ENCODE measurements at regions of chr10 and their contacts with region 1.

Region 1: GRCh38 chr10:102072673-102073527 is 7.8 kb downstream of the HPS6 start:
- DNase-seq: no peak
- H3K4me3 ChIP-seq: no peak overlapping the region
- H3K27me3 ChIP-seq: no peaks in the 10 kb centered on the region
- CTCF ChIP-seq: peak; percentile 95

Region 2: GRCh38 chr10:102040305-102041050 is 32.4 kb before region 1 on chr10:
- CTCF ChIA-PET with region 1: interaction called, 13 read pairs
- POLR2A ChIA-PET with region 1: no interaction called
- DNase-seq: no peak
- H3K4me3 ChIP-seq: no peak overlapping the region
- H3K27me3 ChIP-seq: no peaks in the 10 kb centered on the region
- CTCF ChIP-seq: no peak

Region 3: GRCh38 chr10:102085336-102085735 is 12.4 kb after region 1 on chr10:
- CTCF ChIA-PET with region 1: interaction called, 24 read pairs
- POLR2A ChIA-PET with region 1: no interaction called
- DNase-seq: no peak
- H3K4me3 ChIP-seq: no peak overlapping the region
- H3K27me3 ChIP-seq: no peaks in the 10 kb centered on the region
- CTCF ChIP-seq: no peak

Region 4: GRCh38 chr10:102090772-102091171 is 17.9 kb after region 1 on chr10:
- CTCF ChIA-PET with region 1: interaction called, 24 read pairs
- POLR2A ChIA-PET with region 1: no interaction called
- DNase-seq: no peak
- H3K4me3 ChIP-seq: no peak overlapping the region
- H3K27me3 ChIP-seq: no peaks in the 10 kb centered on the region
- CTCF ChIP-seq: no peak

Region 5: DNA sequence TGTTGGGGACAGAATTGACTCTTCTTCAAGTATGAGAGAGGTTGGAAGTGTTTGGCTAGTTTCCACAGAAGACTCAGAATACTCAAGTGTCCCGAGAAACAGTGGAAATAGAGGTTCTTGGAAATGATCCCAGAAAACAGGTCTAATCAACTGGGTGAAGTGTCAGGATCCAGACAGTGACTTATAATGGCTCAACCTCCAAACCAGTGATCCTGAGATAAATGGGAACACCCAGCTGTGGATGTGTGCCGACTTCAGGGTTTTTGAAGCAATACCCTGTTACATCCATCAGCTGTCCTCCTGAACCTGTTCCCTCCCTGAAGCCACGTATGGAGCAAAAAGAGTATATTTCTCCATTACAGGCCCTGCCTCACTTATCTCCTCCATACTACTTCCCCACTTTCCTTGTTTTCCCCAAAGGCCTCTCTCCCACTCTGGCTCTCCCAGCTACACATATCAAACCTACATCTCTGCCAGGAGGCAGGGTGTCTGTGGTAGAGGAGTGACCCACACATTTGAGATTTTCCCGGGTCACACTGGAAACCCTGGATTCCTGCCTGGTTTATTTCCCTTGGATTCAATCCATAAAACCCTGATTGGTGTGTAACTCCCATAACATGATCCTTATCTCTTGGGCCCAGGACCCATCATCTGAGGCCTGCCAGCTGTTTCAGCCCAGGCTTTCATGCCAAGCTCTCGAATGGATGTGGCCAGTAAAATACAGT is 135.6 kb after region 1 on chr10:
- CTCF ChIA-PET with region 1: no interaction called
- POLR2A ChIA-PET with region 1: no interaction called
- DNase-seq: no peak
- H3K4me3 ChIP-seq: no peak overlapping the region
- H3K27me3 ChIP-seq: peaks cover 2% of the 10 kb centered on the region; the same call in 1 of the 2 replicates
- CTCF ChIP-seq: no peak

Region 6: GRCh38 chr10:102393246-102394078 is 320.6 kb after region 1 on chr10:
- CTCF ChIA-PET with region 1: no interaction called
- POLR2A ChIA-PET with region 1: no interaction called
- DNase-seq: no peak
- H3K4me3 ChIP-seq: peak overlapping the region; percentile 79
- H3K27me3 ChIP-seq: no peaks in the 10 kb centered on the region
- CTCF ChIP-seq: peak; percentile 95; the same call in 1 of the 2 replicates

Measured in BJ (cell line).